CD8-positive, alpha-beta T cell (primary cell): ENCODE measurements at regions of chr4 and their contacts with region 1.

Region 1: GRCh38 chr4:186037692-186038658 is 31.0 kb upstream of the TLR3 start:
- DNase-seq: peak in 2 of 9 experiments; percentile 62 to 63
- ATAC-seq: no peak
- H3K4me3 ChIP-seq: no peak overlapping the region
- H3K4me3 Mint-ChIP-seq: no peak overlapping the region
- H3K27ac ChIP-seq: no peak overlapping the region
- H3K27ac Mint-ChIP-seq: no peak overlapping the region
- H3K4me1 ChIP-seq: no peaks in the 10 kb centered on the region
- H3K4me1 Mint-ChIP-seq: no peaks in the 10 kb centered on the region
- H3K27me3 ChIP-seq: no peaks in the 10 kb centered on the region
- H3K27me3 Mint-ChIP-seq: peaks cover 27% of the 10 kb centered on the region
- CTCF ChIP-seq: peak; percentile 63

Region 2: GRCh38 chr4:185640811-185641675 is 396.9 kb before region 1 on chr4:
- CTCF ChIA-PET with region 1: no interaction called
- POLR2A ChIA-PET with region 1: no interaction called
- intact Hi-C with region 1: loop called in 1 of 2 experiments (anchors 1 kb)
- DNase-seq: peak in 2 of 9 experiments; percentile 24 to 32
- ATAC-seq: no peak
- H3K4me3 ChIP-seq: no peak overlapping the region
- H3K4me3 Mint-ChIP-seq: no peak overlapping the region
- H3K27ac ChIP-seq: no peak overlapping the region
- H3K27ac Mint-ChIP-seq: no peak overlapping the region
- H3K4me1 ChIP-seq: no peaks in the 10 kb centered on the region
- H3K4me1 Mint-ChIP-seq: peaks cover 3% of the 10 kb centered on the region
- H3K27me3 ChIP-seq: peaks cover 0 to 3% of the 10 kb centered on the region in 2 experiments
- H3K27me3 Mint-ChIP-seq: peaks cover 29% of the 10 kb centered on the region
- CTCF ChIP-seq: no peak

Region 3: GRCh38 chr4:186027405-186027804 is 10.6 kb before region 1 on chr4:
- CTCF ChIA-PET with region 1: interaction called, 10 read pairs
- POLR2A ChIA-PET with region 1: no interaction called
- intact Hi-C with region 1: no loop called
- DNase-seq: no peak
- ATAC-seq: no peak
- H3K4me3 ChIP-seq: no peak overlapping the region
- H3K4me3 Mint-ChIP-seq: no peak overlapping the region
- H3K27ac ChIP-seq: no peak overlapping the region
- H3K27ac Mint-ChIP-seq: no peak overlapping the region
- H3K4me1 ChIP-seq: no peaks in the 10 kb centered on the region
- H3K4me1 Mint-ChIP-seq: no peaks in the 10 kb centered on the region
- H3K27me3 ChIP-seq: no peaks in the 10 kb centered on the region
- H3K27me3 Mint-ChIP-seq: peaks cover 26% of the 10 kb centered on the region
- CTCF ChIP-seq: no peak

Region 4: DNA sequence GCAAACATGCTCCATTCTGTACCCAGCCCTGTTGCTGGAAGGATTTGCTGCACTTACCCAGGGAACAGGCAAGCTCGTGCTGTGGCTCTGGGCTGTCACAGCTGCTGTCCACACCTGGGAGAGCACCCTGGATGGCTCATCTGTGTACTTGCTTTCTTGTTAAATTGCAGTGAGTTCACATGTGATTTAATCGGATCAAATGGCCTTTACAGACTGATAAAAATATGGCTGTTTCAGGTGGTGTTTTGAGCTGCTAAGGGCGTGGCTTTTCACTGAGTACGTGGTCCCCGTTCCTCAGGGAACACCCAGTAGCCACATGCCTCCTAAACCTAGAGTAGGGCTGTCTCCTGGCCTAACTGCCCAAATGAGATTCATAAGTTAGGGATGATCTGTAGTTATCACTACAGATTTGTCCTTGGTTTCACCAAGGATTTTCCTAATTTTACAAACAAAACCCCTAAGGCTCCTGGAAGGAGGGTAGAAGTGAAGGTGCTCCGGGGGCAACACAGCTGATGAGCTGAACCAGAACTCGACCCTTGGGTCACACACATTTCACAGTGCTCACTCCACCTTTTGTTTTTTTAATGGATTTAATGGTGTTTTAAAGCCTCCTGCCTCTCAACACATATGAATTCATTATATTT is 203.0 kb after region 1 on chr4:
- CTCF ChIA-PET with region 1: no interaction called
- POLR2A ChIA-PET with region 1: no interaction called
- intact Hi-C with region 1: no loop called
- DNase-seq: no peak
- ATAC-seq: no peak
- H3K4me3 ChIP-seq: no peak overlapping the region
- H3K4me3 Mint-ChIP-seq: no peak overlapping the region
- H3K27ac ChIP-seq: no peak overlapping the region
- H3K27ac Mint-ChIP-seq: no peak overlapping the region
- H3K4me1 ChIP-seq: no peaks in the 10 kb centered on the region
- H3K4me1 Mint-ChIP-seq: no peaks in the 10 kb centered on the region
- H3K27me3 ChIP-seq: no peaks in the 10 kb centered on the region
- H3K27me3 Mint-ChIP-seq: no peaks in the 10 kb centered on the region
- CTCF ChIP-seq: no peak